Activated CD8-positive, alpha-beta T cell treated with anti-CD3 and anti-CD28 coated beads for 36 hours (primary cell): ENCODE measurements at regions of chr4 and their contacts with region 1.

Region 1: GRCh38 chr4:15001869-15002658 is at the start of gene CPEB2:
- DNase-seq: peak; percentile 92
- ATAC-seq: peak; percentile 76
- H3K4me3 Mint-ChIP-seq: peak within 1 kb of the TSS; percentile 81
- H3K27ac Mint-ChIP-seq: peak within 1 kb of the TSS; percentile 95
- H3K4me1 Mint-ChIP-seq: peaks cover 13% of the 10 kb centered on the region
- H3K27me3 Mint-ChIP-seq: no peaks in the 10 kb centered on the region
- CTCF ChIP-seq: no peak
- total RNA-seq, gene CPEB2: 4.1 to 5.3 TPM

Region 2: GRCh38 chr4:13654158-13654797 is 1347.8 kb before region 1 on chr4:
- CTCF ChIA-PET with region 1: interaction called, 7 read pairs
- POLR2A ChIA-PET with region 1: no interaction called
- intact Hi-C with region 1: loop called (anchors 10 kb)
- DNase-seq: peak; percentile 90
- ATAC-seq: peak; percentile 95
- H3K4me3 Mint-ChIP-seq: peak overlapping the region; percentile 69
- H3K27ac Mint-ChIP-seq: no peak overlapping the region
- H3K4me1 Mint-ChIP-seq: peaks cover 12% of the 10 kb centered on the region
- H3K27me3 Mint-ChIP-seq: peaks cover 2% of the 10 kb centered on the region
- CTCF ChIP-seq: peak; percentile 78

Region 3: GRCh38 chr4:14856076-14856933 is 145.8 kb before region 1 on chr4:
- CTCF ChIA-PET with region 1: no interaction called
- POLR2A ChIA-PET with region 1: no interaction called
- intact Hi-C with region 1: loop called (anchors 5 kb)
- DNase-seq: peak; percentile 87
- ATAC-seq: peak; percentile 94
- H3K4me3 Mint-ChIP-seq: no peak overlapping the region
- H3K27ac Mint-ChIP-seq: peak overlapping the region; percentile 86
- H3K4me1 Mint-ChIP-seq: peaks cover 26% of the 10 kb centered on the region
- H3K27me3 Mint-ChIP-seq: peaks cover 22% of the 10 kb centered on the region
- CTCF ChIP-seq: no peak

Region 4: GRCh38 chr4:14920759-14921320 is 81.2 kb before region 1 on chr4:
- CTCF ChIA-PET with region 1: no interaction called
- POLR2A ChIA-PET with region 1: no interaction called
- intact Hi-C with region 1: loop called (anchors 10 kb)
- DNase-seq: peak; percentile 37
- ATAC-seq: peak; percentile 50
- H3K4me3 Mint-ChIP-seq: no peak overlapping the region
- H3K27ac Mint-ChIP-seq: no peak overlapping the region
- H3K4me1 Mint-ChIP-seq: no peaks in the 10 kb centered on the region
- H3K27me3 Mint-ChIP-seq: peaks cover 4% of the 10 kb centered on the region
- CTCF ChIP-seq: no peak

Region 5: GRCh38 chr4:15655229-15656037 is 653.4 kb after region 1 on chr4 and contains the start of gene FBXL5:
- CTCF ChIA-PET with region 1: no interaction called
- POLR2A ChIA-PET with region 1: interaction called, 3 read pairs
- intact Hi-C with region 1: loop called (anchors 5 kb)
- DNase-seq: peak; percentile 85
- ATAC-seq: peak; percentile 76
- H3K4me3 Mint-ChIP-seq: peak within 1 kb of the TSS; percentile 99
- H3K27ac Mint-ChIP-seq: peak within 1 kb of the TSS; percentile 97
- H3K4me1 Mint-ChIP-seq: peaks cover 57% of the 10 kb centered on the region
- H3K27me3 Mint-ChIP-seq: no peaks in the 10 kb centered on the region
- CTCF ChIP-seq: no peak
- total RNA-seq, gene FBXL5: 27.5 to 32.2 TPM